ENCODE measurements at regions of chr2 and their contacts with region 1.

Region 1: DNA sequence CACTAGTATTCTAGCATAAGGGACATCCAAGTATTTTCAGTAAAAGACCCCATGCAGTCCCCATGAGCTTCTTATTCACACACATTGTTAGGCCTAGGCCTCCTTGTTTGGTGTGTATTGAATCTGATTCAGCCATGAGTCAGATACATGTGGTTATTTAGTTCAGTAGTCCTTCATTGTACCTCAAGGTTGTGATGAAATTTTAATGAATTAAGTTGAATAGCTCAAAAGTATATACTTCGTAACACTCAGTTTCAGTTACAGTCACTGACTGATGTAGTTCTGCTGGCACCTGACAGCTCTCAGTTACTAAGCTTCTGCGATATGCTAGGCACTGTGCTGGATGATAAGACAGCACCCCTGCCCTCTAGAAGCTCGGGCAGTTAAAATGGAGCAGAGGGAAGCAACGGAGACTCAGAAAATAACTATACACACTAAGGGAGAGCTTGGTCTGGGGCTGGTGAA is 86.4 kb downstream of the XRCC5 start:
- DNase-seq: peak; percentile 62
- ATAC-seq: peak; percentile 96
- H3K4me3 Mint-ChIP-seq: peak overlapping the region; percentile 1
- H3K27ac Mint-ChIP-seq: peak overlapping the region; percentile 92
- H3K4me1 Mint-ChIP-seq: peaks cover 69% of the 10 kb centered on the region
- H3K27me3 Mint-ChIP-seq: no peaks in the 10 kb centered on the region

Region 2: DNA sequence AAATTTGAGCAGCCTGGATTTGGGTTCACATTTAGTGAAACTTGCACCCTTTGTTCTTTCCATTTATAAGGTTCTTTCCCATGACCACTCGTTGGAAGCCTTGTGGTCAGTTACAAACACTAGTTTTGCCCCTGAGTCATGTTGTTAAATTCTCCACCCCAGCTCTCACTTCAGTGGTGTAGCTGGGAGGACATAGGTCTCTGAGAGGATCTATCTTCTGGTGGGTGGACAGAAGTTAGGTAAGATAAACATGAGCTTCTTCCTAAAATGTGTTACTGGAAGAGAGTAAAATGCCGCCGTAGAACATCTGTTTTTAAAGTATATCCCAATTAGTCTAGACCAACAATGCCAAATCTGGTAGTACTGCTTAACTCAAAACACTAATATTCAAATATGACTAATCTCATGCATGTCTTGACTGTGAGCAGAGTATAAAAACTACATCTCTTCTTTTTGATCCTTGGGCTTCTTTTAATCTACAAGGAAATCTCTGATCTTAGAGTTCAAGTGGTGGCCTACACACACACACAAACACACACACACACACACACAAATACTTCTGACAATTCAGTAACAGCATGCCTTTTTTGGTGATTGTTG is 597.1 kb before region 1 on chr2:
- CTCF ChIA-PET with region 1: no interaction called
- POLR2A ChIA-PET with region 1: no interaction called
- intact Hi-C with region 1: no loop called
- DNase-seq: no peak
- ATAC-seq: no peak
- H3K4me3 Mint-ChIP-seq: no peak overlapping the region
- H3K27ac Mint-ChIP-seq: no peak overlapping the region
- H3K4me1 Mint-ChIP-seq: no peaks in the 10 kb centered on the region
- H3K27me3 Mint-ChIP-seq: no peaks in the 10 kb centered on the region

Region 3: DNA sequence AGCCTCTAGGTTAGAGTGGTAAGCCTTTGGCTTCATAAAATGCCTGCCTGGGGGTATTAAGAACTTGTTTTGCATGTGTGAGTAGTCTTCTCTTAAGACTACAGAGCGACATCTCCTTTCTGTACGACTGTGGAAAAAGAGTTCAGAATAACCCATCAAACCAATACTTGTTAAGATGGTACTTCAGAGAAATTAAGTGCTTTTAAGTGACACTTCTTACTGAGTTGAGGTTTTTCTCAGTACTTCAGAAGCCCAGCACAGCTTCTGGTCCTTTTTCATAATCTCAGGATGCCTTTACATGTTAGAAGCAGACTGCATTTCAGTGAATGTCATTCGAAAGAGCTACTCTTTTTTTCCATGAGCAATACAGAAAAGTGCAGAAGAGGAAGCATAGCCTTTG is 75.6 kb before region 1 on chr2:
- CTCF ChIA-PET with region 1: no interaction called
- POLR2A ChIA-PET with region 1: interaction called, 4 read pairs
- intact Hi-C with region 1: loop called in 1 of 2 experiments (anchors 2 kb)
- DNase-seq: no peak
- ATAC-seq: peak; percentile 91
- H3K4me3 Mint-ChIP-seq: peak overlapping the region; percentile 46
- H3K27ac Mint-ChIP-seq: peak overlapping the region; percentile 98
- H3K4me1 Mint-ChIP-seq: peaks cover 80% of the 10 kb centered on the region
- H3K27me3 Mint-ChIP-seq: no peaks in the 10 kb centered on the region

Region 4: DNA sequence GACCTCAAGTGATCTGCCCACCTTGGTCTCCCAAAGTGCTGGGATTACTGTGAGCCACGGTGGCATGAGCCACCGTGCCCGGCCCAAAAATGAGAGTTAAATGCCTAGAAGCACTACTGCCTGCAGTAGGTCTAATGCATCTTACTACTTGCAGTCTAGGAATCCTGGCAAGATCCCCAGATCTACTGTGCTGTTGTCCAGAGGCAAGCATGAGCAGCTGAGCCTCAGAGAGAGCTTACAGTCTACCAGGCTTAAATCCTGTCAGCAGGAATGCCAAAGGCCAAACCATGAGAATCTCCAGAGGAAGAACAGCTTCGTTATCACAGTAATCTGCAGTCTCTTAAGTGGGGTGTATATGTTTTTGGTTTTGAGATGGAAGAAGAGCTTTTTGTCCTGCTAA is 32.1 kb before region 1 on chr2:
- CTCF ChIA-PET with region 1: interaction called, 3 read pairs
- POLR2A ChIA-PET with region 1: no interaction called
- intact Hi-C with region 1: loop called in 1 of 2 experiments (anchors 5 kb)
- DNase-seq: no peak
- ATAC-seq: no peak
- H3K4me3 Mint-ChIP-seq: no peak overlapping the region
- H3K27ac Mint-ChIP-seq: peak overlapping the region; percentile 21
- H3K4me1 Mint-ChIP-seq: peaks cover 38% of the 10 kb centered on the region
- H3K27me3 Mint-ChIP-seq: no peaks in the 10 kb centered on the region

Region 5: DNA sequence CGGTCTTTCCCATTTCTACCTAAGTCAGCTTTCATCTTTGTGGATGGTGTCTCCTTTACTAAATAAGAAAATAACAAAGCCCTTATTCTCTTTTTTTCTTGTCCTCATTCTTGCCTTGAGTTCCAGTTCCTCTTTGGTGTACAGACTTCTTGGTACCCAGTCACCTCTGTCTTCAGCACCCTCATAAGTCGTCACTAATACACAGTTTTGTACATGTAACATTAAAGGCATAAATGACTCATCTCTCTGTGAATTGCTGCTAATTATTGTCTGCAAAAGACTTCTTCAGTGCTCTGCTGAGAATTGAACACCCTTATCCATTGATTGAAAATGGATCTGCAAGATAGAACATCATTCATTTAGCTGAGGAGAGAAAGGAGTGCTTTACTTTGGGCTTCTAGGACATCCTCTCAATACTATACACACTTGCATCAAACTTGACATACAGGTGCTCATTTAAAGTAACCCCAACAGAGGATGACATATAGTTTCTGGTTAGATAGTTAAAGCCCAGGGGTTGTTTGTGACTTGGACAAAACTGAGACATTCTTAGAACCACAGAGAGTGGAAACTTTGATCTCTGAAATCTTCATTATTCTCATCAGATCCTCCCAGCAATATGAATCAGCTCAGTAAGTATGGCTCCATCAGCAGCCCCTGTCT is 10.6 kb after region 1 on chr2:
- CTCF ChIA-PET with region 1: interaction called, 6 read pairs
- POLR2A ChIA-PET with region 1: interaction called, 12 read pairs
- intact Hi-C with region 1: loop called (anchors 1 kb)
- DNase-seq: no peak
- ATAC-seq: peak; percentile 88
- H3K4me3 Mint-ChIP-seq: no peak overlapping the region
- H3K27ac Mint-ChIP-seq: peak overlapping the region; percentile 94
- H3K4me1 Mint-ChIP-seq: peaks cover 72% of the 10 kb centered on the region
- H3K27me3 Mint-ChIP-seq: no peaks in the 10 kb centered on the region

Region 6: GRCh38 chr2:216222650-216223352 is 27.2 kb after region 1 on chr2:
- CTCF ChIA-PET with region 1: interaction called, 6 read pairs
- POLR2A ChIA-PET with region 1: interaction called, 3 read pairs
- intact Hi-C with region 1: loop called in 1 of 2 experiments (anchors 2 kb)
- DNase-seq: peak; percentile 49
- ATAC-seq: peak; percentile 70
- H3K4me3 Mint-ChIP-seq: peak overlapping the region; percentile 5
- H3K27ac Mint-ChIP-seq: peak overlapping the region; percentile 83
- H3K4me1 Mint-ChIP-seq: peaks cover 33% of the 10 kb centered on the region
- H3K27me3 Mint-ChIP-seq: no peaks in the 10 kb centered on the region

Measured in activated CD4-positive, alpha-beta T cell treated with anti-CD3 and anti-CD28 coated beads for 36 hours (primary cell).